IMR-90 (cell line): ENCODE measurements at regions of chr17 and their contacts with region 1.

Region 1: DNA sequence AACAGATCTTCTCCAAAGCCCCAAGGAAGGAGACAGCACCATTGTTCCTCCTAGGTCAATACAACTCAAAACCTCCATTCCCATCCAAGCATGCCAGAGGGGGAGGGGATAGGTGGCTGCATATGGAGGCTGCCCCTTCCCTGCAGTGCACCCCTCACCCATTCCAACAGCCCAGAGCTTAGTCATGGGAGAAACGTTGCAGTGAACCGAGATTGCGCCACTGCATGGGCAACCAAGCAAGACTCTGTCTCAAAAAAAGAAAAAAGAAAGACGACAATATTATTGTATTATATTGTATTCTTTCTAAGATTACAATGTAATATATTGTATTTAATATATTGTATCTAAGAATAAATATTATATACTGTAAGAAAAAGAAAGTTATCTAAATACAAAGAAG is 36.4 kb upstream of the CD300E start:
- DNase-seq: no peak
- ATAC-seq: no peak
- H3K4me3 ChIP-seq: no peak overlapping the region
- H3K27ac ChIP-seq: no peak overlapping the region
- H3K4me1 ChIP-seq: no peaks in the 10 kb centered on the region
- H3K27me3 ChIP-seq: no peaks in the 10 kb centered on the region
- CTCF ChIP-seq: no peak
- POLR2A ChIP-seq: no peak
- RAD21 ChIP-seq: no peak

Region 2: DNA sequence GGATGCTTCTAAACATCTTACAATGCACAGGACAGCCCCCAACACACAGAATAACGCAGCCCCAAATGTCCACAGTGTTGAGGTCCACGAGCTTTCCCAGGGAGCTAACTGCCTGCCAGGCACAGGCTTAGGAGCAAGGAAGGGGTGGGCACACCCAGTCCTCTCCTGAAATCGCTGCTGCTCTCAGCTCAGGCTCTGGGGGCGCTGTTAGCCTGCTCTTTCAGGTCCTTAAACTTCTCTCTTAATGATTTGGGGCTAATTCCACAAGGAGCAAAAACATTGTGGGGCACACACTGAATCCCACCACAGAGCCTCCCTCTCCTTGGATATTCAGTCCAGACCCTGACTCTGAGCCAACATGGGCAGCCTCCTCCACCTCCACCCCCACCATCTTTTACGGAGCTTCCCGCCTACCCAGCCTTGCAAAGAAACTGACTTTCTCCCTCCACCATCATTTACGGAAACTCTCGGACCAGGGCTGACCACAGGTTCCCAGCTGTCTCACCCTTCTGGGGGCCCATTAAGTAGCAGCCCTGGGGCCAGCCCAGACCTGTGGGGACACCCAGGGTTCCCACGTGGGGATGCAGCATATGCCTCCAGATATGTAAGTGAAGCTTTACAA is 93.7 kb before region 1 on chr17:
- CTCF ChIA-PET with region 1: no interaction called
- POLR2A ChIA-PET with region 1: no interaction called
- dilution Hi-C with region 1: no loop called
- in situ Hi-C with region 1: no loop called
- intact Hi-C with region 1: no loop called
- DNase-seq: no peak
- ATAC-seq: no peak
- H3K4me3 ChIP-seq: no peak overlapping the region
- H3K27ac ChIP-seq: no peak overlapping the region
- H3K4me1 ChIP-seq: no peaks in the 10 kb centered on the region
- H3K27me3 ChIP-seq: no peaks in the 10 kb centered on the region
- CTCF ChIP-seq: no peak
- POLR2A ChIP-seq: no peak
- RAD21 ChIP-seq: no peak

Region 3: DNA sequence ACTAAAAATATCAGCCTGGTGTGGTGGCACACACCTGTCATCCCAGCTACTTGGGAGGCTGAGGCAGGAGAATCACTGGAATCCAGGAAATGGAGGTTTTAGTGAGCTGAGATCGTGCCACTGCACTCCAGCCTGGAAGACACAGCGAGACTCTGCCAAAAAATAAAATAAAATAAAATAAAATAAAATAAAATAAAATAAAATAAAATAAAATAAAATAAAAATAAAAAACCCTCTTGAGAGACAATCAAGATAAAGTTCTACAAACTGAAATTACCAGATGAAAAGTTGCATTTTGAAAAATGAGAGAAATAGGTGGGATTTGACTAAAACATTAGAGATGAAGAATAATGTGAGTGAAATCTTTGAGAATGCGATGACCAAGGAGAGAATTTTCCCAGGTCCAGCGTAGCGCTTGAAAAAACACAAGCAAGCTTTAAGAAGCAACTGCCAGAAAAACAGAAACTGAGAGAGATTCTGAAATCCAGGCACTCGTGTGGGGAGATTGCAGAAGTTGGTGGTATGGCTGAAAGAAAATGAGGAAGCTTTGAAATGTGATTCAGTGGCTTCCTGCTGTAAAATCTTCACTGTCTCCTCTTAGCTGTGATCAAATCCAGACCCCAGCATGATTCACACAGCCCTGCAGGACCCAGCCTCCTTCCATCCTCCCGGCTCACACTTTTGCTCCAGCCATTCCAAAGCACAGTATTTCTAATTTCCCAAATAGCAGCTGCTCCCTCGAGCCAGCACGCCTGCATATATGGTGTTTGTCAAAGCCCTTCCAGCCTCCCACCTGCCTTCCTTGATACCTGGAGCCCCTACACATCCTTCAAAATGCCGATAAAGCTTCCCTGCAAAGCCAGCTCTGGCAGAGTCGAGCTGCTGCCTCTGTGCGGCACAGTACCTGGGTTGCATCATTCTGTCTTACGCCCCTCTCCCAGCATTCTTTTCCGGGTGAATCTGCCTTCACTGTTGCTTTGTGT is 28.1 kb before region 1 on chr17:
- CTCF ChIA-PET with region 1: no interaction called
- POLR2A ChIA-PET with region 1: no interaction called
- dilution Hi-C with region 1: no loop called
- in situ Hi-C with region 1: no loop called
- intact Hi-C with region 1: no loop called
- DNase-seq: no peak
- ATAC-seq: no peak
- H3K4me3 ChIP-seq: no peak overlapping the region
- H3K27ac ChIP-seq: no peak overlapping the region
- H3K4me1 ChIP-seq: no peaks in the 10 kb centered on the region
- H3K27me3 ChIP-seq: no peaks in the 10 kb centered on the region
- CTCF ChIP-seq: no peak
- POLR2A ChIP-seq: no peak
- RAD21 ChIP-seq: no peak

Region 4: DNA sequence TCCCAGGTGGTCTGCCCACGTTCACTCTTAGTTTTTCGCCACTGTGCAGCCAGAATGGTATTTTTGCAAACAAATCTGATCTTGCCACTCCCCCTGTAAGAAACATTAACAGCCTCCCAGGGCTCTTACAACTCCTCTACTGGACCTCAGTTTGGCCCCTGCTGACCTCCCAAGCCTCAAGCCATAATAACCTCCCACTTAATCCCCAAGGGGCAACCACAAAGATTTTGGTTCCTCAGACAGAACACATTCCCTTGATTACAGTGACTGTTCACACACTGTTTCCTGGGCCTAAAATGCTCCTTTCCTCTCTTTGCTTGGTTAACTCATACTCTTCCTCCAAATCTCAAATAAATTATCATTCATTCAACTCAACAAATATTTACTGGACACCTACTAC is 14.9 kb before region 1 on chr17:
- CTCF ChIA-PET with region 1: interaction called, 15 read pairs
- POLR2A ChIA-PET with region 1: no interaction called
- dilution Hi-C with region 1: no loop called
- in situ Hi-C with region 1: no loop called
- intact Hi-C with region 1: no loop called
- DNase-seq: no peak
- ATAC-seq: no peak
- H3K4me3 ChIP-seq: no peak overlapping the region
- H3K27ac ChIP-seq: no peak overlapping the region
- H3K4me1 ChIP-seq: no peaks in the 10 kb centered on the region
- H3K27me3 ChIP-seq: no peaks in the 10 kb centered on the region
- CTCF ChIP-seq: no peak
- POLR2A ChIP-seq: no peak
- RAD21 ChIP-seq: no peak

Region 5: GRCh38 chr17:74736513-74737298 is 76.8 kb after region 1 on chr17 and contains the start of gene RAB37:
- CTCF ChIA-PET with region 1: interaction called, 29 read pairs
- POLR2A ChIA-PET with region 1: no interaction called
- dilution Hi-C with region 1: no loop called
- in situ Hi-C with region 1: no loop called
- intact Hi-C with region 1: loop called (anchors 2 kb)
- DNase-seq: no peak
- ATAC-seq: peak; percentile 15; the same call in 1 of the 2 replicates
- H3K4me3 ChIP-seq: no peak within 1 kb of the TSS; the same call in 1 of the 2 replicates
- H3K27ac ChIP-seq: no peak within 1 kb of the TSS
- H3K4me1 ChIP-seq: peaks cover 4% of the 10 kb centered on the region; the same call in 1 of the 2 replicates
- H3K27me3 ChIP-seq: peaks cover 47% of the 10 kb centered on the region
- CTCF ChIP-seq: peak; percentile 12; the same call in 1 of the 2 replicates
- POLR2A ChIP-seq: no peak
- RAD21 ChIP-seq: no peak
- total RNA-seq, gene RAB37: not detected in 2 replicates

Region 6: DNA sequence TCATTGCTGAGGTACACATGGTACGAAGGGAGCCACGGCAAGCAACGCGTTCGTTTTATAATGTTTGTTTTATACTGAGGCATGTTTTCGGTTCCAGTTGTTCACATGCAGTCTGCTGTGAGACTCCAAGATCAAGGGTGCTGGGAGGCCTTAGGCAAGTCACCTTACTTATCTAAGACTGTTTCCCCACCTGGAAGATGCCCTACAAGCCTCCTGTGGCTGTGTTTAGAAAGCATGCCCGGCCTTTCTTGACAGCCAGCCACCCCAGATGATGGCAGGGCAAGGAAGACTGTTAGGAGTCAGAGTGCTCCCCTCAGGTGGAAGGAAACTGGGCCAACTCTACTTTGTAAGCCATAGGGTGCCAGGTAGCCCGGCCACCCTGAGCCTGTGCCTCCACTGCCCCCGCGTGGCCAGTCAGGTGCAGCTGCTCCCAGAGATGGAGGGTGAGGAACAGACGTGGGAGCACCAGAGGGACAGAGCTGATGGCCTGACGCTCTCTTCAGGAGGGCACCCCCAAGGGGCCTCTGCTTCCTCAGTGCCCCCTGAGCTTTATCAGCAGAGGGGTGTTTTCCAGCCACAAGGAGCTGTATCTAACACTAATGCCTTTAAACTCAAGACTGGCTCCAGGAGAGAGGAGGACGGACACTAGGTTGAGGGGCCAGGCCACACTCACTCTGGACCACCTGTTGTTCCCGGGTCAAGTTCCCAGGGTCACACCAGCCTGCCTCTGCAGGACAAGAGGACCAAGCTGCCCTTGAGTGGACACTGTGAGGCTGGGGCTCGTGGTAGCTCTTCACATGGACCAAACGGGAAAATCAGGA is 110.8 kb after region 1 on chr17:
- CTCF ChIA-PET with region 1: interaction called, 3 read pairs
- POLR2A ChIA-PET with region 1: no interaction called
- dilution Hi-C with region 1: no loop called
- in situ Hi-C with region 1: no loop called
- intact Hi-C with region 1: loop called (anchors 1 kb)
- DNase-seq: peak; percentile 24
- ATAC-seq: peak; percentile 53
- H3K4me3 ChIP-seq: no peak overlapping the region
- H3K27ac ChIP-seq: no peak overlapping the region
- H3K4me1 ChIP-seq: peaks cover 15% of the 10 kb centered on the region
- H3K27me3 ChIP-seq: no peaks in the 10 kb centered on the region
- CTCF ChIP-seq: peak; percentile 70
- POLR2A ChIP-seq: no peak
- RAD21 ChIP-seq: peak; percentile 78